ENCODE measurements at regions of chr3 and their contacts with region 1.

Region 1: DNA sequence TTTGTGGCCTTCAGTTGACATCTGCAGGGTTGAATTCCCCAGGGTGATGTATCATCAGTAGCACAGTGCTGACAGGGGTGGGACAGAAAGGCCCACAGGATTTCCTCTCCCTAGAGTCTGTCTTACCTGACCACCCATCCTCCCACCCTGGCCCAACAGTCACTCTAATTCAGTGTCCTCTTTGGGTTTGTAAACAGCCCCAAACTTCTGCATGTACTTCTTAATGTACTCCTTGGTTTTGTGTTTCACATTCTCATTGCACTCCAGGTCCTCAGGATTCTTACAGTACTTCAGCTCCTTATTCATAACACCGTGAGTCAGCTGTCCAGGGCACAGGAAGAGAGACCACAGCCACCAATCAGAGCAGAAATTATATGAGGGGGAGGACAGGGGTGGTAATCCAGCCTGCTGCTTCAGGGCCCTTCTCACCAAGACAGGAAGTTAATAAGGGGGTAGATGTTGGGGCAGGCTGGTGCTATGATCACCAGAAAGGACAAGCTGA is 37.5 kb downstream of the NBEAL2 start:
- DNase-seq: peak; percentile 62
- H3K4me3 Mint-ChIP-seq: no peak overlapping the region
- H3K27ac Mint-ChIP-seq: peak overlapping the region; percentile 80
- H3K4me1 Mint-ChIP-seq: peaks cover 58% of the 10 kb centered on the region
- H3K27me3 Mint-ChIP-seq: no peaks in the 10 kb centered on the region

Region 2: DNA sequence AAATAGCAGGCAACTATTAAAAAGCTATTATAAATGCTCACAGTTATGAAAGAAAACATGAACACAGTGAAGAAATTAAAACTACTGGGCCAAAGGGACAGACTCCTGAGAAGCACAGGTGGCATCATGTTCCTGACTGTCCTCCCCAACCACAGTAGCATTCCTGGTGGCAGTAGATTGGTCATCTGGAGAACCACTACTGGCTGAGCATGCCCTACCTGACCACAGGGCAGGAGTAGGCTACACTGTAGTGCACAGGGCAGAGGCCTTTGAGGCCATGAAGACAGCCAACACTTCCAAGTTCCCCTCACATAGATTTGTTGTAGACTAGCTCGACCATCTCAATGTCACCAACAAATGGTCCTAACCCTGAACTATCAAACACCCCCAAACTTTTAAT is 11.7 kb after region 1 on chr3:
- CTCF ChIA-PET with region 1: interaction called, 3 read pairs
- POLR2A ChIA-PET with region 1: interaction called, 24 read pairs
- DNase-seq: no peak
- H3K4me3 Mint-ChIP-seq: no peak overlapping the region
- H3K27ac Mint-ChIP-seq: no peak overlapping the region
- H3K4me1 Mint-ChIP-seq: peaks cover 30% of the 10 kb centered on the region
- H3K27me3 Mint-ChIP-seq: no peaks in the 10 kb centered on the region